Mammary epithelial cell (primary cell): ENCODE measurements at regions of chr11 and their contacts with region 1.

Region 1: DNA sequence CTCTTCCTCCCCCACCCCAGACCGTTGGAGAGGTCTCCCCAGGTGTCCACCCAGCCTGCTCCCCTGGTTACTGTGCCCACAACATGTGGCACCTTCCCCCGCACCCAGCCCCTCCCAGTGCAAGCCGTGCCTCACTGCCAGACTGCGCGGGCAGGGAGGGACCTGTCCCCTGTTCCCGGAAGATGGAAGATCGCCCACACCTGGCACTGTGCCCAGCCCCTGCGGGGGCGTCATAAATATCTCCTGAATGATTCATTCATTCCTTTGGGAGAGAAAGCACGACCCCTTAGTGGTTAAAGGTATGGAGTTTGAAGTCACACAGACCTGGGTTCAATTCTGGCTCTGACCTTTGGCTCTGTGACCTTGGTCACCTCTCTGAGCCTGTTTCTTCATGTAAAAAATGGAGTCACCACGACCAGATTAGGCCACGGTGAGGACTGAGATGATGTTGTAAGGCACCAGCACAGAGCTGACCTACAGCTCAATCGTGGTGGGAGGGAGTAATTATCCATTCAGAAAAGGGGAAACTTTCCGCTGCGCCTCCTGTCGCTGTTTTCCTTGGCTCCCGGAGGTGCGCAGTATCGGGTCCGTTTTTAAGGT is 506 bp upstream of the SYT12 start:
- DNase-seq: peak; percentile 79
- H3K4me3 ChIP-seq: peak overlapping the region in 1 of 3 experiments; percentile 44
- H3K27ac ChIP-seq: peak overlapping the region; percentile 37
- H3K4me1 ChIP-seq: peaks cover 41% of the 10 kb centered on the region
- H3K27me3 ChIP-seq: no peaks in the 10 kb centered on the region
- CTCF ChIP-seq: no peak

Region 2: GRCh38 chr11:66752148-66752547 is 270.3 kb before region 1 on chr11:
- CTCF ChIA-PET with region 1: interaction called, 25 read pairs
- dilution Hi-C with region 1: no loop called
- in situ Hi-C with region 1: no loop called
- intact Hi-C with region 1: no loop called
- DNase-seq: no peak
- H3K4me3 ChIP-seq: no peak overlapping the region
- H3K27ac ChIP-seq: no peak overlapping the region
- H3K4me1 ChIP-seq: peaks cover 11% of the 10 kb centered on the region
- H3K27me3 ChIP-seq: no peaks in the 10 kb centered on the region
- CTCF ChIP-seq: no peak

Region 3: DNA sequence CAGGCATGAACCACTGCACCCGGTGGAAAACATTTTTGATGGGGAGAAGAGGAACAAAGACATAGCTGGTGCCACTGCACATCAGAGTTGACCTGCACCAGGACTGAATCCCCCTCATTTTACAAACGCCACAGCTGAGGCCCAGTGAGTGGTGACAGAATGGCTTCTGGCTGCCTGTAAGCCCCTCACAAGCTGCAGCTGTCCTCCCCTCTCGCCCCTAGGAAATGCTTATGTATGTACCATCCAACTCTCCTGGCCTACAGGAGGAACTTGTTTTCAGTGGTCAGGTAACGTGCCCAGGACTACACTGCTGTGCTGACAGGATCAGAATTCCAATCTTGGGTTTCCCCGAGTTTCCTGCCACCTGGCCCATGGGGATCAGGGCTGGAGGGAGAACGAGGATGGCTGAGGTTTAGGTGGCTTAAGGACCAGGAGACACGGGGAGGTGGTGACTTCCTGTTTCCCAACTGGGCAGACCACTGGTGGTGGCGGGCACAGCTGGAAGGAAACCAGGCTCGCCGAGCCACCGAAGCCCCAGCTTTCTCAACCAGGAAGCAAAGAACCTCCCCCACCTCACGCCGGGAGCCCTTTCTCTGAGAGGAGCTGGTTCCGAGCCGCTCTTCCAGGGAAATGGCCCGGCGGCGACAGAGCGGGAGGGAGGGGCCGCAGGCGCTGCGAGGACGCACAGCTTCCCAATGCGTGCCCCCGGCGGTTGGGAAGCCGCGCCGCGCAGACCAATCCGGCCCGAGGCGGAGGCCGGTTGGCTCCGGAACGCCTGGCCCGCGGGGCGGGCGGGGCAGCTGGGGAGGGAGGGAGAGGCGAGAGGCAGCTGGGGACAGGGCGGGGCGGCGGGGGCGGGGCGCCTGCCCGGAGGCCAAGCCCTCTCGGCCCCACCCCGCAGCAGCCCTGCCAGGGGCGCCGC is 166.6 kb before region 1 on chr11:
- CTCF ChIA-PET with region 1: interaction called, 14 read pairs
- dilution Hi-C with region 1: no loop called
- in situ Hi-C with region 1: no loop called
- intact Hi-C with region 1: loop called (anchors 5 kb)
- DNase-seq: peak; percentile 82
- H3K4me3 ChIP-seq: peak overlapping the region; percentile 48 to 78 (median 62)
- H3K27ac ChIP-seq: peak overlapping the region; percentile 35
- H3K4me1 ChIP-seq: peaks cover 19% of the 10 kb centered on the region
- H3K27me3 ChIP-seq: no peaks in the 10 kb centered on the region
- CTCF ChIP-seq: no peak

Region 4: DNA sequence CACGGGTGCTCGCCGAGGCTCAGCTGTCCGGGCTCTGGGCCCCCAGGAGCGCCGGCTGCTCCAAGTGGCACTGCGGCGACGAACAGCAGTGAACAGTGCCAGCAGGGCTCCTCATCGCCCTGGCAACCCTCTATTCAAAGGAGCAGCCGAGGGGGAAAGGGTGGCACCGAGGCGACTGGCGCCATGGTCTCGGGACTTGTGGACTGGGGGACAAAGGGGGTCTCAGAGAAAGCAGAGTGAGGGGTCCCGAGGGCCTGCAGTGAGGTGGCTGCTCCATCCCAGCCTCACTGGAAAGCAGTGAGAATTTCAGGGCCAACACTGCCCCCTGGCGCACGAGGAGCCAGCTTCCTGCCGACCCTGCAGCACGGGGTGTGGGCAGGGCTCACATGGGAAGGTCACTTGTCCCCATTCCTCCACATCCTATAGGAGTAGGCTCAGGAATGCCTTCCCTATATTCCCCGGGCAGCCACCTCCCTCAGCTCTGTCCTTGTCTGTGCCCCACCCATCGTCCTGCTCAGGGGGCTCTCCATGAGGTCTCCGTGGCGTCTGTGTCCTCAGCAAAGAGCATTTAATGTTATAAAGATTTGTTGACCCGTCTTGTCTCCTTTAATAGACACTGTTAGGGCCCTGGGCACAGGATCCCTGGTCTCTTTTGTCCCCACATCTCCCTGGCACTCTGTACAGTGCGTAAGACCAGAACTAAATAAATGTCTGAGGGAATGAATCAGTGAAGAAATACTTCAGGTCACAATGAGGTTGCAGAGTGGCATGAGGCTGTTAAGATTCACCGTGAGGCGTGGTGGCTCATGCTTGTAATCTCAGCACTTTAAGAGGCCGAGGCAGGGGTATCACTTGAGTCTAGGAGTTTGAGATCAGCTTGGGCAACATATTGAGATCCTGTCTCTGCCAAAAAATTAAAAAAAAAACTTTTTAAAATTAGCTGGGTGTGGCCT is 139.1 kb before region 1 on chr11:
- CTCF ChIA-PET with region 1: no interaction called
- dilution Hi-C with region 1: no loop called
- in situ Hi-C with region 1: no loop called
- intact Hi-C with region 1: loop called (anchors 10 kb)
- DNase-seq: peak; percentile 60
- H3K4me3 ChIP-seq: no peak overlapping the region
- H3K27ac ChIP-seq: no peak overlapping the region
- H3K4me1 ChIP-seq: peaks cover 38% of the 10 kb centered on the region
- H3K27me3 ChIP-seq: no peaks in the 10 kb centered on the region
- CTCF ChIP-seq: peak; percentile 62 to 76

Region 5: GRCh38 chr11:66981976-66982578 is 40.4 kb before region 1 on chr11:
- CTCF ChIA-PET with region 1: no interaction called
- dilution Hi-C with region 1: no loop called
- in situ Hi-C with region 1: no loop called
- intact Hi-C with region 1: no loop called
- DNase-seq: peak; percentile 89
- H3K4me3 ChIP-seq: no peak overlapping the region
- H3K27ac ChIP-seq: no peak overlapping the region
- H3K4me1 ChIP-seq: peaks cover 41% of the 10 kb centered on the region
- H3K27me3 ChIP-seq: no peaks in the 10 kb centered on the region
- CTCF ChIP-seq: no peak

Region 6: DNA sequence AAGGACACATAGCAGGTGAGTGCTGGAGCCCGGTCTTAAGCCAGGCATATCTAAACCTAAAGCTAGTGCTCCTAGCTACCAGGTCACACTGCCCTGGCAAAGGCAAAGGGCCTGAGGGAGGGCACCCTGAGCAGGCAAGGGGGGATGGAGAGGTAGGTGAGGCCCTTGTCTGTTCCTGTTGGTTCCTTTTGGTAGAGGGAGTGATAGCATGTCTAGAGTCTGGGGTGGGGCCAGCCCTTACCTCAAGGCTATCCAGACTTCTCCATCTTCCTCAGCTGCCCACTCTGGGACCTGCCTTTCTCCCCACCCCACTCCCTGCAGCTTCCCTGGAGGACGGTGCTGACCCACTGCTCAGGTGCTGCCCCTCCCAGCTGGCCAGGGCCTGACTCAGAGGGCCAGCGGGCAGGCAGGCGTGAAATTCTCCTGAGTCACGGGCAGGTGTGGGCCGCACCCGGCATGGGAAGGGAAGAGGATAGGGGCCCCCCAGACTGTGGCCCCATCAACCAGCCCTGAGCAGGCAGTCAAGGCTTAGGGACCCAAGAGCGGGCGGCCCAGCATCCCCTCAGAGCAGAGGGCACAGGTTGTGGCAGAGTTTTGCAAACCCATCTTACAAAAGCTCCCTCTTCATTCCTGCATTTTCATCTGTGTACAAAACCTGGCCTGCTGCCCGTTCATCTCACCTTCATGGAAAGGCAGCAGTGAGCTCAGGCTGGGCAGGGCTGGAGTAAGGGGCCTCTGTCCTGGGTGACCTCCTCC is 40.1 kb after region 1 on chr11:
- CTCF ChIA-PET with region 1: no interaction called
- dilution Hi-C with region 1: no loop called
- in situ Hi-C with region 1: no loop called
- intact Hi-C with region 1: no loop called
- DNase-seq: peak; percentile 95
- H3K4me3 ChIP-seq: peak overlapping the region in 1 of 3 experiments; percentile 5
- H3K27ac ChIP-seq: peak overlapping the region; percentile 83
- H3K4me1 ChIP-seq: peaks cover 43% of the 10 kb centered on the region
- H3K27me3 ChIP-seq: no peaks in the 10 kb centered on the region
- CTCF ChIP-seq: no peak